ENCODE measurements at regions of chr20 and their contacts with region 1.

Region 1: DNA sequence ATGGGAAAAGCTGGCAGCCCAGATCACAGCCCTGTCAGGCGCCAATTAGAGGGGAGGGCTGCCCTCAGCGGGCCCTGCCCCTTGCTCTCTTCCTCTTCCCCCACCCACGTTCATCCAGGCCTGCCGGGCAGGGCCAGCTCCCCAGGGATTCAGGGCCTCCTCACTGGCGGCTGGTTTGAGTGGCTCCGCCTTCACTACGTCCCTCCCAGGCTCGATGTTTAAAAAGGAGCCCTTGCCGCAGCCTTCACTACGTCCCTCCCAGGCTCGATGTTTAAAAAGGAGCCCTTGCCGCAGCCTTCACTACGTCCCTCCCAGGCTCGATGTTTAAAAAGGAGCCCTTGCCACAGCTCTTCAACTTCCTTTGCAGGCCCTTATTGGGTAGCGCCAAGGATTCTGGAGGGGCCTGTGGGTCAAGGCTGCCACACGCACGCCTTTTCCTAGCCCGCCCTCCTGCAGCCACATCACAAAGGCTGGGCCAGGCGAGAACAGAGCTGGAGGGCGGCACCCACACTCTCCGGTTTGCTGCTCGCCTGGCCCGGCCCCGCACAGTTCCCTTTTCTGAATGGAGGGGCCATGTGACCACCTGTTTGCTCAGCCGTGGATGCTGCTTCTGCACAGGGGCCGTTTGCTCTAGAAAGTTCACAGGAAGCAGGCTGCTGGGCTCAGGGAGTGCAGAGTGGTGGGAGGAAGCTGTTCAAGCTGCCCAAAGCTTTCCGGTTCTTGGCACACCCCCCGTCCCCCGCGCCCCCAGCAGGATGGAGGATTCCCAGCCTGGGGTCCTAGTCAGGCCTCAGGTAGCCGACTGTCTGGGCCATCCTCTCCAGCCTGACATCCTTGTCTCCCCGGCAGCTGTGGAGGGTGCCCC is 1.6 kb downstream of the SLC17A9 start:
- DNase-seq: peak; percentile 96
- H3K4me3 ChIP-seq: peak overlapping the region; percentile 44
- H3K27ac ChIP-seq: peak overlapping the region; percentile 89
- H3K4me1 ChIP-seq: peaks cover 24% of the 10 kb centered on the region
- CTCF ChIP-seq: no peak

Region 2: GRCh38 chr20:62918831-62919230 is 35.2 kb before region 1 on chr20:
- CTCF ChIA-PET with region 1: no interaction called
- POLR2A ChIA-PET with region 1: interaction called, 3 read pairs
- intact Hi-C with region 1: loop called (anchors 2 kb)
- DNase-seq: peak; percentile 52
- H3K4me3 ChIP-seq: peak overlapping the region; percentile 48
- H3K27ac ChIP-seq: peak overlapping the region; percentile 61
- H3K4me1 ChIP-seq: peaks cover 86% of the 10 kb centered on the region
- CTCF ChIP-seq: no peak

Region 3: DNA sequence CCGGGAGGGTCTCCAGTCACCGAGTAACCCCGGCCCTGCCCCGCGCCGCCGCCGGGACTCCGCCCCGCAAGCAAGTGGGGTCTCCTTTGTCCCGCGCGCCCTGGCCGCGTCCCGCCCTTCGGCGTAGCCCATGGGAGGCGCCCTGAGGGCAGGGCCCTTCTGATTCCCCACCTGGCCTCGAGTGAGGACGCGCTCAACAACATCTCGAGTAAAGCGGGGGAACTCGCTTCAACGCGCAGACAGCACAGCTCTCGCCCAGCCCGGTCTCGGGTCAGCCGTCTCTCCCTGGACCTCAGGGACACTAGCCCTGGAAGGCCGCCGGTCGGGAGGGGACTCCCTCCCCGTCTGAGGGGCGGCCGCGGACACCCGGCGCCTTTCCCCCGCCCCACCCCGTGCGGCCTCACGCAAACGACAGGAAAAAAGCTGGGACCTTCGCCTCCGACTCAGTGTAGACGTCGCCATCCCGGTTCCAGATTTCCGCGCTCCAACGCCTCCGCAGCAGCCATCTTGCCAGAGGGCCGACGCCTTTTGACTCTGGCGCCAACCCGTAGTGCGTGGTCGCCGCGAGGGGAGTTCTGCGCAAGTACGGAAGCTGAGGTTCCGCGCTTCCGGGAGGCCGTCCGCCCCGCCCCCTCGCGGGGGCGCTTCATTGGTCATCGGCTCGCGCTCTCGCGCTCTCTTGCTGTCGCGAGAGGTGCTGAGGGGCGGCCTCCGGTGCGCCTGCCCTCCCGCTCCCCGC is 16.5 kb before region 1 on chr20:
- CTCF ChIA-PET with region 1: no interaction called
- POLR2A ChIA-PET with region 1: interaction called, 6 read pairs
- intact Hi-C with region 1: loop called (anchors 1 kb)
- DNase-seq: peak; percentile 98
- H3K4me3 ChIP-seq: peak overlapping the region; percentile 82
- H3K27ac ChIP-seq: peak overlapping the region; percentile 63
- H3K4me1 ChIP-seq: peaks cover 48% of the 10 kb centered on the region
- CTCF ChIP-seq: no peak